ENCODE measurements at regions of chr3 and their contacts with region 1.

Region 1: DNA sequence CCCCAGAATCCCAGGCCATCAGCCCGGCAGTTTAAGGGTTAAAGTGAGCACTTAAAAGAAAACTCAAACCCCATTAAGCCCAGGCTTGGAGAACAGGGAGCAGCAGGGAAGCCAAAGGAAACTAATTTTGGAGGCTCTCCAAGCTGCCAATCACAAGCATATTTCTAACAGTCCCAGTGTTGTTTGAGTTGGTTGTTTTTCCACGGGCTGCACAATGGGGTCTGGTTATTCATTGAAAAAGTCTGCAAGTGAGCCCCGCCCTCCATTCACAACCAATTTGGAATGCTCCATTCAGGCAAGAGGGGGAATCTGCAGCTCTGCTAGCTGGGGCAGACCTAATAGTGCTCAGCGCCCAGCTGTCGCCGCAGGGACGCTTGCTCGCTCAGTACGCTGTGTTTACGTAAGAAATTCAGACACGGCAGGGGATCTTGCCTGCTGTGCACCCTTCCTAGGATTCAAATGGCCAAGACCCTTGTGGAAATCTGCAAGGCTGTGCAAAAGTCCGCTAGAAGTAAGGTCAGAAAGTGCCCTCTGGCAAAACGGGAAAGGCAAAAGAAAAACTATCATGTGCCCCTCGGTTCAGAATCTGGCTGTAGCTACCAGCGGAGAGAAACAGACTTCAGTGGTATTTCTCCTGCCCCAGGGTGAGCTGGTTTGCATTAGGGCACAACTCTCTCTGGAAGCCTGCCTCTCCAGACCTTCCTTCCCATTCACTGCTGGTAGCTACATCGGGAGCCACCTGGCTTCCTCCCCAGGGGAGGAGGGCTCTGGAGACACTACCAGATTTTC is 11.0 kb downstream of the ETV5 start:
- DNase-seq: peak; percentile 91
- H3K4me3 ChIP-seq: peak overlapping the region; percentile 39
- H3K4me3 Mint-ChIP-seq: peak overlapping the region; percentile 85
- H3K27ac Mint-ChIP-seq: no peak overlapping the region
- H3K4me1 ChIP-seq: peaks cover 14% of the 10 kb centered on the region
- H3K4me1 Mint-ChIP-seq: peaks cover 26% of the 10 kb centered on the region
- H3K27me3 ChIP-seq: no peaks in the 10 kb centered on the region
- H3K27me3 Mint-ChIP-seq: no peaks in the 10 kb centered on the region
- CTCF ChIP-seq: no peak

Region 2: GRCh38 chr3:186002884-186003472 is 94.9 kb before region 1 on chr3:
- CTCF ChIA-PET with region 1: no interaction called
- POLR2A ChIA-PET with region 1: no interaction called
- intact Hi-C with region 1: loop called (anchors 5 kb)
- DNase-seq: peak in 1 of 2 experiments; percentile 22
- H3K4me3 ChIP-seq: no peak overlapping the region
- H3K4me3 Mint-ChIP-seq: no peak overlapping the region
- H3K27ac Mint-ChIP-seq: no peak overlapping the region
- H3K4me1 ChIP-seq: no peaks in the 10 kb centered on the region
- H3K4me1 Mint-ChIP-seq: no peaks in the 10 kb centered on the region
- H3K27me3 ChIP-seq: no peaks in the 10 kb centered on the region
- H3K27me3 Mint-ChIP-seq: peaks cover 6% of the 10 kb centered on the region
- CTCF ChIP-seq: peak; percentile 11 to 29

Region 3: DNA sequence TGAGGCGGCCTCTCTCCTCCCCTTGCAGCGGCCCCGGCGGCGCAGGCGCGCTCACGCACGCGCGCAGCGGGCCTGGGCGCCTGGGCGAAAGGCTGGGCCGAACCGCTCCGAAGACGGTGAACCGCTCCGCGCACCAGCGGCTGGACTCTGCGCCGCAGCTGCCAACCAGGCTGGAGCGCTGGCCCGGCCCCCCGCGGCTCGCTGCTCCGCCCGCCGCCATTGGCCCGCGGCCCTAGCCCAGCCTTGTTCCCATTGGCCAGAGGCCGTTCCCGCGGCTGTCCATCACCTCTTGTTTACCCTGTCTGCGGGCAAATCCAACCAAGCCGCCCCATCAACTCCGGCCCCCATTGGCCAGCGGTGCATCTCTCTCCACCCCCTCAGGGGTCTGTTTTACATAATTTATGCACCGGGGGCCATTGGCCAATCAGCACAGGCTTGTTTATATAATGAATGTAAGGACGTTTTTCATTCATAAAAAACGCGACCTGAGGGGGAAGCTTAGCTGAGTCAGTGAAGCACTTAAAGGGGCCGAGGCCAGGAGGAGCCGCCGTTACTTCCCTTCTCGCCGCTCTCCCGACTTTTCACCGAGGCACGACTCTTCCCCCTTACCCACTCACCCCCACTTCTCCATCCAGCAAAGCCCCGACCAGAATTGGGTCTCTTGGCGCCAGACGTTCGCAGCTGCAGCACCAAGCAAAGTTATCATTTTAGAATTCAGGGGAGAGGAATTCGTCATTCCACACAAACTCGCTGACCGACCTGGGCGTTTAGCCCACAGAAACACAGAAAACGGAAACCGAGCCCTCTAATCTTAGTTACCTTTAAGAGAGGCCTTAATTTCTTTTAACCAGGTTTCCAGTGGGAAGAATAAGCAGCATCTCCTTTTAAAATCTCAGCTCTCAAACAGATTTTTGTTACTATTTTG is 11.3 kb after region 1 on chr3 and contains the start of gene ETV5:
- CTCF ChIA-PET with region 1: interaction called, 6 read pairs
- POLR2A ChIA-PET with region 1: interaction called, 6 read pairs
- intact Hi-C with region 1: loop called (anchors 1 kb)
- DNase-seq: peak; percentile 99
- H3K4me3 ChIP-seq: peak within 1 kb of the TSS; percentile 64
- H3K4me3 Mint-ChIP-seq: peak within 1 kb of the TSS; percentile 80
- H3K27ac Mint-ChIP-seq: peak within 1 kb of the TSS; percentile 79
- H3K4me1 ChIP-seq: peaks cover 8% of the 10 kb centered on the region; the same call in 1 of the 2 replicates
- H3K4me1 Mint-ChIP-seq: peaks cover 25% of the 10 kb centered on the region
- H3K27me3 ChIP-seq: no peaks in the 10 kb centered on the region
- H3K27me3 Mint-ChIP-seq: no peaks in the 10 kb centered on the region
- CTCF ChIP-seq: no peak
- total RNA-seq, gene ETV5: 16.2 and 18.6 TPM in 2 replicates

Region 4: GRCh38 chr3:186142393-186142932 is 44.6 kb after region 1 on chr3:
- CTCF ChIA-PET with region 1: no interaction called
- POLR2A ChIA-PET with region 1: no interaction called
- intact Hi-C with region 1: loop called (anchors 1 kb)
- DNase-seq: no peak
- H3K4me3 ChIP-seq: no peak overlapping the region
- H3K4me3 Mint-ChIP-seq: no peak overlapping the region
- H3K27ac Mint-ChIP-seq: no peak overlapping the region
- H3K4me1 ChIP-seq: no peaks in the 10 kb centered on the region
- H3K4me1 Mint-ChIP-seq: peaks cover 7% of the 10 kb centered on the region
- H3K27me3 ChIP-seq: no peaks in the 10 kb centered on the region
- H3K27me3 Mint-ChIP-seq: no peaks in the 10 kb centered on the region
- CTCF ChIP-seq: no peak

Region 5: GRCh38 chr3:186540221-186540834 is 442.5 kb after region 1 on chr3:
- CTCF ChIA-PET with region 1: no interaction called
- POLR2A ChIA-PET with region 1: no interaction called
- intact Hi-C with region 1: loop called (anchors 10 kb)
- DNase-seq: peak; percentile 66 to 76
- H3K4me3 ChIP-seq: no peak overlapping the region
- H3K4me3 Mint-ChIP-seq: no peak overlapping the region
- H3K27ac Mint-ChIP-seq: no peak overlapping the region
- H3K4me1 ChIP-seq: no peaks in the 10 kb centered on the region
- H3K4me1 Mint-ChIP-seq: peaks cover 9% of the 10 kb centered on the region
- H3K27me3 ChIP-seq: no peaks in the 10 kb centered on the region
- H3K27me3 Mint-ChIP-seq: no peaks in the 10 kb centered on the region
- CTCF ChIP-seq: peak; percentile 67